ENCODE measurements at regions of chr12 and their contacts with region 1.

Region 1: DNA sequence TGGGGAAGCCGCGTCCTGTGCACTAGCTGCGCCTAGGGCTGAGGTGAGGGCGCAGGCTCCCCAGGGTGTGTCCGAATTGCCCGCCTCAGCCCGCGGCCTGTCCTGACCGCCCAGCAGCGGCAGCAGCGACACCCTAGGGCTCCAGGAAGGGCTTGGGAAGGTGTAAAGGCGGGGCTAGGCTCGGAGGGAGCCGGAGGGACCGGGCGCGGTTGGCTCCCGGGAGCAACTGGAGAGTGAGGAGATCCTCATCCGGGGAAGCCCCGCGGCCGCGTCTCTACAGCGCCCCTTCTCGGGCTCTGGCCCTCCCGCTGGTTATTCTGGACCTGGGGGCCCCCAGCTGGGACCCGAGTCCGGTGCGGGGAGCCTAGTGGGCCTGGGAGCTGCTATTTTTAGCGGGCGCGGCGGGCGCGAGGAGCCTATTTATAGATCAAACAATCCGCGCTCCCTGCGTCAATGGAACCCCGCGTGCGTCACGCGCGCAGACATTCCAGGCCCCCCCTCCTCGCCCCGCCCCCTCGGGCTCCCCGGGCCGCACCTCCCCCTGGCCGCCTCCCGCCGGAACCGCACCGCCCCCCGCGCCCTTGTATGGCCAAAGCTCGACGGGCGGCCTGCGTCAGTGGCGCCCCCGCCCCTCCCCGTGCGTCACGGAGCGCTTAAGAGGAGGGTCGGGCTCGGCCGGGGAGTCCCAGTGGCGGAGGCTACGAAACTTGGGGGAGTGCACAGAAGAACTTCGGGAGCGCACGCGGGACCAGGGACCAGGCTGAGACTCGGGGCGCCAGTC is at the start of gene NR4A1:
- DNase-seq: peak; percentile 93 to 98 (median 97)
- ATAC-seq: peak; percentile 91
- H3K4me3 ChIP-seq: peak within 1 kb of the TSS; percentile 50
- H3K27ac ChIP-seq: peak within 1 kb of the TSS; percentile 68
- H3K4me1 ChIP-seq: peaks cover 20 to 42% of the 10 kb centered on the region in 2 experiments
- H3K27me3 ChIP-seq: no peaks in the 10 kb centered on the region; a peak in 1 of 5 replicates
- CTCF ChIP-seq: peak; percentile 18; a peak in 4 of 6 replicates
- EP300 ChIP-seq: no peak; the same call in 1 of the 2 replicates
- POLR2A ChIP-seq: peak; percentile 67
- RAD21 ChIP-seq: no peak; a peak in 1 of 4 replicates
- polyA plus RNA-seq, gene NR4A1: 0.08 TPM in 1 of 2 experiments, not detected in the other

Region 2: GRCh38 chr12:52038447-52038846 is 12.5 kb before region 1 on chr12:
- CTCF ChIA-PET with region 1: no interaction called
- POLR2A ChIA-PET with region 1: interaction called, 11 read pairs
- in situ Hi-C with region 1: no loop called
- intact Hi-C with region 1: no loop called
- DNase-seq: no peak
- ATAC-seq: no peak
- H3K4me3 ChIP-seq: no peak overlapping the region
- H3K27ac ChIP-seq: no peak overlapping the region
- H3K4me1 ChIP-seq: peaks cover 8 to 27% of the 10 kb centered on the region in 2 experiments; a peak in 4 of 5 replicates
- H3K27me3 ChIP-seq: peaks cover 0 to 6% of the 10 kb centered on the region in 2 experiments; a peak in 1 of 5 replicates
- CTCF ChIP-seq: no peak
- EP300 ChIP-seq: no peak
- POLR2A ChIP-seq: no peak
- RAD21 ChIP-seq: no peak

Region 3: GRCh38 chr12:52069327-52070184 is 18.6 kb after region 1 on chr12 and contains the start of gene ATG101:
- CTCF ChIA-PET with region 1: no interaction called
- POLR2A ChIA-PET with region 1: interaction called, 23 read pairs
- in situ Hi-C with region 1: no loop called
- intact Hi-C with region 1: no loop called
- DNase-seq: peak; percentile 89 to 95 (median 93)
- ATAC-seq: peak; percentile 98
- H3K4me3 ChIP-seq: peak within 1 kb of the TSS; percentile 65
- H3K27ac ChIP-seq: peak within 1 kb of the TSS; percentile 87
- H3K4me1 ChIP-seq: peaks cover 9 to 16% of the 10 kb centered on the region in 2 experiments
- H3K27me3 ChIP-seq: peaks cover 0 to 4% of the 10 kb centered on the region in 2 experiments; a peak in 2 of 5 replicates
- CTCF ChIP-seq: peak; percentile 92 to 97 (median 96)
- EP300 ChIP-seq: peak; percentile 68
- POLR2A ChIP-seq: peak; percentile 90
- RAD21 ChIP-seq: peak in 1 of 2 experiments; percentile 23; a peak in 1 of 4 replicates
- polyA plus RNA-seq, gene ATG101: 2.9 to 3.9 TPM

Region 4: DNA sequence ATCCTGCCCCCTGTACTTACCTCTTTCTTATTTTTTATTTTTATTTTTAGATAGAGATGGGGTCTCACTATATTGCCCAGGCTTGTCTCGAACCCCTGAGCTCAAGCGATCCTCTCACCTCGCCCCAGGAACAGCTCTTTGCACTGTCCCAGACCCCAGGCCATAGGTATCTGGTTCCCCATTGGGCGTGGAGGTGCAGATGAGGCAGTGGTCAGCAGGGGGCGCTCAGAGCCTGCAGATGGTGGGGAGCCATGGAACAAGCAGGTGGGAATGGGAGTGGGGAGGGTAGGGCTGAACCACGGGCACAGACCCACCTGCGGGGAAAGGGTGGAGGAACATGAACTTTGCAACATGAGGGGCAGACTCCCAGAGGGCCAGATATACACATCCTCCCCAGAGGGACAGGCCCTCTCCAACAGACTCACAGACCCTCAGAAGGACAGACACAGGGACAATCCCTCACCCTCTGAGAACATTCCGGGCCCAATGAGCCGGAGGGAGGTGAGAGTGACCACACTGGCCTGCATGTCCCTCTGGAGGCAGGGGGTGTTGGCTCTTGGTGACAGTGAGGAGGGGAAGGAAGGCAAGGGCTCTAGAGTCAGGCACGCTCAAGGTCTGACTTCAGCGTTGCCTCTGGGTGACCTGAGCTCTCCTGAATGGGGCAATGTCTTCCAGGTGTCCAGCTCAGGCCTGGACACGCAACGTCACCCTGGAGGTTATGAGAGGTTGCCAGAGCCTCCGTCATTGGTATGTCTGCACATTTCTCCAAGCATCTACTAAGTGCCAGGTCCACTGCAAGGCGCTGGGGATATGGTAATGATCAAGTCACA is 106.0 kb after region 1 on chr12:
- CTCF ChIA-PET with region 1: no interaction called
- POLR2A ChIA-PET with region 1: no interaction called
- in situ Hi-C with region 1: no loop called
- intact Hi-C with region 1: no loop called
- DNase-seq: peak; percentile 76 to 86 (median 82)
- ATAC-seq: peak; percentile 88
- H3K4me3 ChIP-seq: no peak overlapping the region
- H3K27ac ChIP-seq: no peak overlapping the region
- H3K4me1 ChIP-seq: peaks cover 0 to 6% of the 10 kb centered on the region in 2 experiments; a peak in 3 of 5 replicates
- H3K27me3 ChIP-seq: peaks cover 7 to 18% of the 10 kb centered on the region in 2 experiments; a peak in 4 of 5 replicates
- CTCF ChIP-seq: peak; percentile 90 to 96 (median 92)
- EP300 ChIP-seq: no peak
- POLR2A ChIP-seq: no peak
- RAD21 ChIP-seq: peak; percentile 81 to 90

Region 5: DNA sequence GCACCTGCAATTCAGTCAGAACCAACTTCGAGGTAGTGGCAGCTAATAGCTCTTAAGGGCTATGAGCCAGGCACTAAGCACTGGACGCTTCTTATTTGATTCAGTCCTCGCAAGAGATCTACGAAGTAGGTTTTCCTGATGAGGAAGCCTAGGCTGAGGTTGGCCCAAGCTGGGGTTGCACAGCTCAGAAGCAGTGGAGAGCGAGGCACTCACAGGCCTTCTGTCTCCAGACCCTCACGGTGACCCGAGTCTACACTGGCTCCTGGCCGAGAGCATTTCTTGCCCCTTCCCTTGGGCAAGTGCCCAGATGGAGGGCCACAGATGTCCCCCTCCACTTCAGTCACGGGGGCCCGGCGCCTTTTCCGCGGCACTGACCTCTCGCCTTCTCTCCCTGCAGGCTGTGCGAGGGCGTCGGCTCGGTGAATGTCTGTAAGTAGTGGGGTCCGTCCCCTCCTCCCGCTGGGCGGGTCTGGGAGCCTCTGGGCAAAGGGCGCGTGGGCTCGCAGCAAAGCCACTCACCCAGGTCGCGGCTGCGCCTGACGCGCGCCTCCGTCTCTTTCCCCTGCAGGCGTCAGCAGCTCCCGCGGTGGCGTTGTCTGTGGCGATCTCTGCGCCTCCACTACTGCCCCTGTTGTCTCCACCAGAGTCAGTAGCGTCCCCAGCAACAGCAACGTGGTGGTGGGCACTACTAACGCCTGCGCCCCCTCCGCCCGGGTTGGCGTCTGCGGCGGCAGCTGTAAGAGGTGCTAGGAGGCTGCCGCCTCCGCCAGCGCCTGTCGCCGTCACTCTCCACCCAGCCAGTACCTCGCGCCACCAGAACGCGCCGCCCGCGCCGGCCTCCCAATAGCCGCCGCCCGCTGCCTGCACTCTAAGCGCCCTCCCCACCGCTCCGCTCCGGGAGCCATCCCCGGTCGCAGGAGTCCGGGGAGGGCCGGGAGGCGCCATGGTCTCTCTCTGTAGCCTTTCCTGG is 257.2 kb after region 1 on chr12:
- CTCF ChIA-PET with region 1: no interaction called
- POLR2A ChIA-PET with region 1: no interaction called
- in situ Hi-C with region 1: no loop called
- intact Hi-C with region 1: no loop called
- DNase-seq: peak in 3 of 4 experiments; percentile 14 to 30 (median 26)
- ATAC-seq: peak; percentile 77
- H3K4me3 ChIP-seq: no peak overlapping the region
- H3K27ac ChIP-seq: no peak overlapping the region
- H3K4me1 ChIP-seq: peaks cover 0 to 8% of the 10 kb centered on the region in 2 experiments; a peak in 2 of 5 replicates
- H3K27me3 ChIP-seq: peaks cover 13 to 34% of the 10 kb centered on the region in 2 experiments; a peak in 4 of 5 replicates
- CTCF ChIP-seq: 0 out of 6 replicates have a peak, but pooled peaks of 1 of the 3 experiments have one; percentile 6
- EP300 ChIP-seq: no peak
- POLR2A ChIP-seq: no peak
- RAD21 ChIP-seq: no peak

Region 6: DNA sequence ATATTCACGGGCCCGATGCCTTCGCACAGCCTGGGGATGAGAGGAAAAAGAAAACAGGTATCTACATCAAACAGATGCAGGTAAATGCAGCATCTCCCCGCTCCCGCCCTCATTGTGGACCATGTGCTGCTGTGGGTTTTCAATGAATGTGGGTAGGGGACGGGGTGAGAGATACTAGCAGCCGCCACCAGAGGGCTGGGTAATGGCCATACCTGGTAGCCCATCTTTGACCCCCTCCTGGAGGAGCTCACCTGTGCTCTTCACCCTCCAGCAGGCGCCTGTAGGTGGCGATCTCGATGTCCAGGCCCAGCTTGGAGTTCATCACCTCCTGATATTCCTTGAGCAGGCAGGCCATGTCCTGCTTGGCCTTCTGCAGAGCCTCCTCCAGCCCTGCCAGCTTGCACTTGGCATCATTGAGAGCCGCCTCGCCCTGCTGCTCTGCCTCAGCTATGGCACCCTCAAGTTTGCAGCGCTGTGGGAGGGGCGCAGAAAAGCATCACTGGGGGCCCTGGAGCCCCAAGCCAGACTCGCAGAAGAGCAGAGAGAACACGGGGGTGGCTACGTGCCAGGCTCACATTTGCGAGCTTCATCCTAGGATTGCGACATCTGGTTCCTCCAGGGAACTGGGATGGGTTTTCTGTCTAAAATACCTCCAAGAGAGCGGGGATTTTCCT is 344.9 kb after region 1 on chr12:
- CTCF ChIA-PET with region 1: no interaction called
- POLR2A ChIA-PET with region 1: no interaction called
- in situ Hi-C with region 1: no loop called
- intact Hi-C with region 1: no loop called
- DNase-seq: peak; percentile 14 to 57 (median 33)
- ATAC-seq: peak; percentile 69
- H3K4me3 ChIP-seq: no peak overlapping the region
- H3K27ac ChIP-seq: no peak overlapping the region
- H3K4me1 ChIP-seq: no peaks in the 10 kb centered on the region
- H3K27me3 ChIP-seq: peaks cover 0 to 51% of the 10 kb centered on the region in 2 experiments; a peak in 2 of 5 replicates
- CTCF ChIP-seq: peak; percentile 35 to 45 (median 44)
- EP300 ChIP-seq: no peak
- POLR2A ChIP-seq: no peak
- RAD21 ChIP-seq: 0 out of 4 replicates have a peak, but pooled peaks of 1 of the 2 experiments have one; percentile 18